ENCODE measurements at regions of chr16 and their contacts with region 1.

Region 1: DNA sequence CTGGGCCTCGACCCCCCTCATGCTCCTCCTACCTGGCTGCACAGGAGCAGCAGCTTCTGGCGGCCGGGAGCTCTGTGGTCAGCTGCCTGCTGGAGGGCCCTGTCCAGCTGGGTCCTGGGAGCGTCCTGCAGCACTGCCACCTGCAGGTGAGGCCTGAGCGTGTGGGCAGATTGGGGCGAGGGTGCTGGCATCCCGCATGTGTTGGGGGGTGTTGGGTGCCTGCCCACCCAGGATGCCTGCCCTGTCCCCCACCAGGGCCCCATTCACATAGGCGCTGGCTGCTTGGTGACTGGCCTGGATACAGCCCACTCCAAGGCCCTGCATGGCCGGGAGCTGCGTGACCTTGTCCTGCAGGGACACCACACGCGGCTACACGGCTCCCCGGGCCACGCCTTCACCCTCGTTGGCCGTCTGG is 16.5 kb downstream of the FCSK start:
- DNase-seq: no peak
- H3K4me3 ChIP-seq: no peak overlapping the region
- H3K4me3 Mint-ChIP-seq: no peak overlapping the region
- H3K27ac ChIP-seq: no peak overlapping the region
- H3K27ac Mint-ChIP-seq: no peak overlapping the region
- H3K4me1 ChIP-seq: no peaks in the 10 kb centered on the region
- H3K4me1 Mint-ChIP-seq: no peaks in the 10 kb centered on the region
- H3K27me3 ChIP-seq: no peaks in the 10 kb centered on the region
- H3K27me3 Mint-ChIP-seq: no peaks in the 10 kb centered on the region

Region 2: DNA sequence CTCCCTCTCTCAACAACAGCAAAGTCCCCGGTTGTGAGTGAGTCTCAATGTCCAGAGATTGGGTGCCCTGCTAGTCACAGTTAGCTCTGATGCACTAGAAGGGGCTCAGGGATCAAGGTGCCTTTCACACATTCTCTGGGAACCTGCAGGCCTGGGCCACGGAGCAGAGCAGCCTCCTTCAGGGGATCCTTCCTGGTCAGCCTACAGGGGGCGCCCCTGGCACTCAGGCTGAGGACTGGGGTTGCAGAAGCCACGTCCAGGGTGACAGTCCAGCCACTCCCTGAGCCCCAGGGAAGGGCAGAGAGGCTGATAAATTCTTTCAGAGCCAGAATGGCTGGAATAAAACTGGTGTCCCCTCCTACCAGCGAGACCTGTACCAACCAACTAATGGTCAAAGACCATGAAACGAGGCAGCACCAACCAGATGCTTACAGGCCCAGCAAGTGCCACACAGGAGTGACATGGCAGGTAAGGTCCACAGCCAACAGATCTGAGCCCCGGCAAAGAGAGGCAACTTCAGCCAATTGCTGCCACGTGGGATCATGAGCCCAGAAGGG is 75.5 kb before region 1 on chr16:
- CTCF ChIA-PET with region 1: interaction called, 12 read pairs
- POLR2A ChIA-PET with region 1: no interaction called
- intact Hi-C with region 1: loop called (anchors 5 kb)
- DNase-seq: peak in 4 of 5 donors; percentile 48 to 50 (median 49)
- H3K4me3 ChIP-seq: no peak overlapping the region
- H3K4me3 Mint-ChIP-seq: no peak overlapping the region
- H3K27ac ChIP-seq: no peak overlapping the region
- H3K27ac Mint-ChIP-seq: peak overlapping the region in 2 of 7 donors; percentile 63 to 66
- H3K4me1 ChIP-seq: no peaks in the 10 kb centered on the region
- H3K4me1 Mint-ChIP-seq: peaks cover 0 to 2% (median under 1%) of the 10 kb centered on the region in 4 donors
- H3K27me3 ChIP-seq: no peaks in the 10 kb centered on the region
- H3K27me3 Mint-ChIP-seq: no peaks in the 10 kb centered on the region

Region 3: DNA sequence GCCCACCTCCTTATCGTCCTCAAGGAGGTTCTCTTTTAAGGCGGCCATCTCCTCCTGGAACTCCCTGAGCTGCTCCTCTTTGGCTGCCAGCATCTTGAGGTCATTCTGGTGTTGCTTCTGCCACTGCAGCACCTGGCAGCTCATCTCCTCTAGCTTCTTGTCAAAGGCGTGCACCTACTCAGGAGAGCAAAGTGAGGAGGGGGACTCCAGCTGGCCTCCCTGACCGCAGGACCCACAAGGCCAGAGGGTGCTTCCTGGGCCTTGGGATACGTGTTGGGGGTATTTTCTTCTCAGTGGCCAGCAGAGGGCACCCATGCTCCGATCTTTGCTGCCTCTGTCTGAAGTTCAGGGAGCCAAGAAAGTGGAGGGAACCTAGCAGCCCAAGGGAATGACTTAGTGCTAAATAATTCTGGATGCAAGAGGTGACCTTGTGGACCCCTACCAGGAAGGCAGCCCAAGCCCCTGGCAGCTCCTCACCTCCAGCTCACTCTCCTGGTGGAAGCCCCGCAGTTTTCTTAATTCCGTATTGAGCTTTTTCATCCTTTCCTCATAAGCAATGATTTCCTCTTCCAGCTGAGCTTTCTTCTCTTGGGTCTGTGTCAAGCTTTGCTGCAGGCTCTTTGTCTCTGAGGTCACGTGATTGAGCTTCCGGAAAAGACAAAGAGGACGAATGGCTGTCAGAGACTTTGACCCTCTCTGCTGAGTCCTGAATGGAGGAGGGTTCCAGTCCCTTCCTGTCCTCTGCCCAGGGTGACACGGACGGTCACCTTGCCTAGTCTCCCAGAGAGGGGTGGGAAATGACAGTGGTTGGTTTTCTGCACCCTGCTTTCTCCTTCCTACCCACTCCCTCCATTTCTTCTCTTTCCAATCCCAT is 1654.1 kb after region 1 on chr16:
- CTCF ChIA-PET with region 1: no interaction called
- POLR2A ChIA-PET with region 1: no interaction called
- intact Hi-C with region 1: no loop called
- DNase-seq: peak; percentile 38 to 59 (median 45)
- H3K4me3 ChIP-seq: no peak overlapping the region
- H3K4me3 Mint-ChIP-seq: no peak overlapping the region
- H3K27ac ChIP-seq: no peak overlapping the region
- H3K27ac Mint-ChIP-seq: no peak overlapping the region
- H3K4me1 ChIP-seq: no peaks in the 10 kb centered on the region
- H3K4me1 Mint-ChIP-seq: no peaks in the 10 kb centered on the region
- H3K27me3 ChIP-seq: no peaks in the 10 kb centered on the region
- H3K27me3 Mint-ChIP-seq: no peaks in the 10 kb centered on the region